ENCODE measurements at regions of chr12 and their contacts with region 1.

Region 1: DNA sequence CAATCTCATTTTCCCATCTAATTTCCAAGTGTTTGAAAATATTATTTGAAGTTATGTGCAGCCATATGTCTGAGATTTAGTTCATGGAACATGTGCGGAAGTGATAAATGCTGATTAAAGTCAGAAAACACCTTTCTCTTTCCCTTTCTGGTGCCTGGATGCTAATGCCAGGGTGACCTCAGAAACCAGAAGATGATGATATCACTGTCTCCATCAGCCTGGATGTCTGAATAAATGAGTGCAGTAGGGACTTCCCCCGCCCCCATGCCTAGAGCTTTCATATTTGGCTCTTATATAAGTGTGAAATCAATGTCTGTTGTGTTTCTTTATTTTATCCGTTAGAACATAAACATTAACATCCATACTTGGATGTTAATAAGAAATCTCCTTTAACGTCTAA is 261.9 kb upstream of the LRIG3 start:
- DNase-seq: no peak
- H3K4me3 ChIP-seq: no peak overlapping the region
- H3K27ac ChIP-seq: no peak overlapping the region
- H3K4me1 ChIP-seq: no peaks in the 10 kb centered on the region
- H3K27me3 ChIP-seq: no peaks in the 10 kb centered on the region
- CTCF ChIP-seq: no peak
- POLR2A ChIP-seq: no peak

Region 2: GRCh38 chr12:57935839-57936512 is 1246.2 kb before region 1 on chr12:
- intact Hi-C with region 1: loop called (anchors 5 kb)
- DNase-seq: peak; percentile 88 to 89
- H3K4me3 ChIP-seq: peak overlapping the region; percentile 54 to 81 (median 65)
- H3K27ac ChIP-seq: peak overlapping the region; percentile 81 to 84
- H3K4me1 ChIP-seq: no peaks in the 10 kb centered on the region
- H3K27me3 ChIP-seq: no peaks in the 10 kb centered on the region
- CTCF ChIP-seq: no peak
- POLR2A ChIP-seq: peak; percentile 2

Region 3: GRCh38 chr12:58359084-58359483 is 823.1 kb before region 1 on chr12:
- intact Hi-C with region 1: loop called (anchors 10 kb)
- DNase-seq: no peak
- H3K4me3 ChIP-seq: no peak overlapping the region
- H3K27ac ChIP-seq: no peak overlapping the region
- H3K4me1 ChIP-seq: no peaks in the 10 kb centered on the region
- H3K27me3 ChIP-seq: no peaks in the 10 kb centered on the region
- CTCF ChIP-seq: no peak
- POLR2A ChIP-seq: no peak

Region 4: DNA sequence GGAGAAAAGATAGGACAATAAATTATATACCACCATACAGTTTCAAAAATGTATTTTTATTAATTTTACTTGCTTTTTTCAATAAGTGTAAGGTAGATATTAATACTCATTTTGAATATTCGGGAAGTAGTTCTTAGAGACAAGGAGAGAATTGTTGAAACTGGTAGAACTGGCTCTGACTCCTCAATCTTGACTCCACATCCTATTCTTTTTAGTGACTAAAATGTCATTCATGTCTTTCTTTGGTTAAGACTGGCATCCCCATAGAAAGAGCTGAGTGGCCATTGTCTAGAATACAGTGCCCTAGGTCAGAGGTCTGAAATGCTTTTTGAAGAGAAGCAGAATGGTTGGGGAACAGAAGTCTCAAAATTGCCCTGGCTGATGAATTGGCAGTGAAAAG is 84.3 kb before region 1 on chr12:
- intact Hi-C with region 1: no loop called
- DNase-seq: no peak
- H3K4me3 ChIP-seq: no peak overlapping the region
- H3K27ac ChIP-seq: no peak overlapping the region
- H3K4me1 ChIP-seq: no peaks in the 10 kb centered on the region
- H3K27me3 ChIP-seq: no peaks in the 10 kb centered on the region
- CTCF ChIP-seq: no peak
- POLR2A ChIP-seq: no peak

Region 5: DNA sequence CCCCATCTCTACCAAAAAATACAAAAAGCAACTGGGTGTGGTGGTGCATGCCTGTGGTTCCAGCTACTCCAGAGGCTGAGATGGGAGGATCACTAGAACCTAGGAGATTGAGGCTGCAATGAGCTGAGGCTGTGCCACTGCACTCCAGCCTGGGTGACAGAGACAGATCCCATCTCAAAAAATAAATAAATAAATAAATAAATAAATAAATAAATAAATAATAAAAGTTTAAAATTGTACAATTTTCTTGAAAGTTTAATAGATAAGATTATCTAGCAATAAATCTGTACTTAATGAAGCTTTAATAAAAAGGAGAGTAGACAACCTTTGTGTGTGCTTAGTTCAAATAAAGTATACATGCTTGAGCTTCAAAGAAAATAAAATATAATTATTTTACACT is 48.1 kb after region 1 on chr12:
- intact Hi-C with region 1: no loop called
- DNase-seq: no peak
- H3K4me3 ChIP-seq: no peak overlapping the region
- H3K27ac ChIP-seq: no peak overlapping the region
- H3K4me1 ChIP-seq: no peaks in the 10 kb centered on the region
- H3K27me3 ChIP-seq: no peaks in the 10 kb centered on the region
- CTCF ChIP-seq: no peak
- POLR2A ChIP-seq: no peak

Region 6: GRCh38 chr12:60180298-60180697 is 998.1 kb after region 1 on chr12:
- intact Hi-C with region 1: no loop called
- DNase-seq: no peak
- H3K4me3 ChIP-seq: no peak overlapping the region
- H3K27ac ChIP-seq: no peak overlapping the region
- H3K4me1 ChIP-seq: no peaks in the 10 kb centered on the region
- H3K27me3 ChIP-seq: no peaks in the 10 kb centered on the region
- CTCF ChIP-seq: no peak
- POLR2A ChIP-seq: no peak

Measured in breast epithelium (tissue), 4 donors.